ENCODE measurements at regions of chr3 and their contacts with region 1.

Region 1: GRCh38 chr3:73502609-73503583 is 121.8 kb downstream of the PDZRN3 start:
- DNase-seq: peak in 2 of 3 donors; percentile 64 to 65
- ATAC-seq: peak; percentile 79
- H3K4me3 ChIP-seq: no peak overlapping the region
- H3K4me1 ChIP-seq: no peaks in the 10 kb centered on the region
- CTCF ChIP-seq: peak; percentile 66

Region 2: DNA sequence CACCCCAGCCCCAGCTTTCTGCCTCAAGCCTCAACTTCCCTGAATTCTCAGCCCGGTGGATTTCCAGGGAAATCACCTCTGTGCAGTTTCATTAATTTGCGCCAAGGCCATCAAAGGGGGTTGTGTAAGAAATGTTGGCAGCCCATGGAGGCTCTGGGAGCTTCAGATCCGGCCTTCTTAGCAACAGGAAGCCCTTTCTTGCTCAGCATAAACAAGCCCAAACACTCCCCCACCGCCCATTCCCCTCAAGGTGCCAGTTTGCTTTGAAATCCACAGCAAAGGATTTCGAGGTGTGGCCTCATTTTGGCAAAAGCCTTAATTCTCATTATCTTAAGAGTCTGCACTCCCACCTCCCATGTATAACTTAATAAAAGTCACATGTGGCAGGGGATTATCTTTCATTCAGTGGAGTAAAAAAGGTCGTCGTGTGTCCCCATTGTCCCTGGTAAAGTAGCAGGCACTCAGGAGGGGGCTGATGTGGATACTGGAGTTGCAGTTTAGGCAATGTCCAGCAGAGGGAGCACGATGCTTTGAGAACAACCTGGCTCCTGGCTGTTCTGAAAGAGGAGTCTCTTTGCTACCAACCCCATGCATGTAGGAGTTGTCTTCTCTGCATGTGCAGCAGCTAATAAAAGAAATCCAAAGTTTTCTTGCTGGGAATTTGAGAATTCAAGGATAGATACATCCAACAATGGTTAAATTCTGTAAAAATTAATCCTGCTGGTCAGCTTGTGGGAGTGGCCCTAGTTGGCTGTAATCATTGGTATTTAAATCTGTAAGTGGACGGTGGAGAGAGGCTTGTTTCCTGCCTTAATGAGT is 401.9 kb before region 1 on chr3:
- intact Hi-C with region 1: loop called (anchors 5 to 10 kb)
- DNase-seq: peak in 2 of 3 donors; percentile 71 to 95
- ATAC-seq: peak; percentile 94
- H3K4me3 ChIP-seq: no peak overlapping the region
- H3K4me1 ChIP-seq: no peaks in the 10 kb centered on the region
- CTCF ChIP-seq: peak; percentile 80

Region 3: GRCh38 chr3:73848173-73848906 is 345.4 kb after region 1 on chr3:
- intact Hi-C with region 1: loop called (anchors 10 kb)
- DNase-seq: peak in 1 of 3 donors; percentile 20
- ATAC-seq: no peak
- H3K4me3 ChIP-seq: no peak overlapping the region
- H3K4me1 ChIP-seq: no peaks in the 10 kb centered on the region
- CTCF ChIP-seq: peak; percentile 36

Measured in mucosa of descending colon (tissue), 3 donors.